Mammary epithelial cell (primary cell): ENCODE measurements at regions of chr11 and their contacts with region 1.

Region 1: DNA sequence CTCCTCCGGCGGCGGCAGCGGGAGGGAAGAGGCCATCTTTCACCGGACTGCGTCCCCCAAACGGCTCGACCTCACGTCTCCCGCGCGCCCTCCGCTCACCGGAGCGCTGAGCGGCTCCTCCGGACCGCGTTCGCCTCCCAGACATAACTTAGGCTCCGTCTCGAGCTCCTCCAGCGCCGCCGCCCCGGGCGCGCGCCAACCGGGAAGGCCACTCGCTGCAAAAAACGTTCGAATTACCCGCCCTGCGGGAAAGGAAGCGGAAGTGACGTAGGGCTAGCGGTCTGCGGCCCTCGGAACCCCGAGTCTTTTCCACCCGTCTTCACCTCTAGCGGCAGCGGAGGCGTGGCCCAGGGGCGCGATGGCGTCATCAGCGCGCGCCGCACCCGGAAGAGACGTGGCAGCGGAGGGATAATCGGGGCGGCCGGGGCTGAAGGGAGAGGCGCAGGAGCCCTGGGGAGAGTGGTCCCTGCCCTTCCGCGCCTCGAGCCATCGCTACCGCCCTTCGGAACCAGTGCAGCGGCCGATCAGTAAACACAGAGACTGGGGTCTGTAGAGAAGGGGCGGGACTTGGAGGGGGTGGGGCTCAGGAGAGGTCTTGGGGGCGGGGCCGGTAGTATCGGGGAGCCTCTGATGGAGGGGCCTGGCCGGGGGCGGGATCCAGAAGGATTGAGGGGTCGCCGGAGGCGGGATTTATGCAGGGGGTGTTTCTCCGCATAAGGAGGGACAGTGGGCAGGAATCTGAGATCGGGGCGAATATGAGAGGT is at the starts of genes CDCA5 and ZFPL1:
- DNase-seq: peak; percentile 93
- H3K4me3 ChIP-seq: peak within 1 kb of the TSS; percentile 72 to 88 (median 80)
- H3K27ac ChIP-seq: peak within 1 kb of the TSS; percentile 70
- H3K4me1 ChIP-seq: peaks cover 33% of the 10 kb centered on the region
- H3K27me3 ChIP-seq: no peaks in the 10 kb centered on the region
- CTCF ChIP-seq: no peak
- total RNA-seq, gene CDCA5: 2.2 to 34.6 TPM
- total RNA-seq, gene ZFPL1: 38.0 to 40.0 TPM

Region 2: DNA sequence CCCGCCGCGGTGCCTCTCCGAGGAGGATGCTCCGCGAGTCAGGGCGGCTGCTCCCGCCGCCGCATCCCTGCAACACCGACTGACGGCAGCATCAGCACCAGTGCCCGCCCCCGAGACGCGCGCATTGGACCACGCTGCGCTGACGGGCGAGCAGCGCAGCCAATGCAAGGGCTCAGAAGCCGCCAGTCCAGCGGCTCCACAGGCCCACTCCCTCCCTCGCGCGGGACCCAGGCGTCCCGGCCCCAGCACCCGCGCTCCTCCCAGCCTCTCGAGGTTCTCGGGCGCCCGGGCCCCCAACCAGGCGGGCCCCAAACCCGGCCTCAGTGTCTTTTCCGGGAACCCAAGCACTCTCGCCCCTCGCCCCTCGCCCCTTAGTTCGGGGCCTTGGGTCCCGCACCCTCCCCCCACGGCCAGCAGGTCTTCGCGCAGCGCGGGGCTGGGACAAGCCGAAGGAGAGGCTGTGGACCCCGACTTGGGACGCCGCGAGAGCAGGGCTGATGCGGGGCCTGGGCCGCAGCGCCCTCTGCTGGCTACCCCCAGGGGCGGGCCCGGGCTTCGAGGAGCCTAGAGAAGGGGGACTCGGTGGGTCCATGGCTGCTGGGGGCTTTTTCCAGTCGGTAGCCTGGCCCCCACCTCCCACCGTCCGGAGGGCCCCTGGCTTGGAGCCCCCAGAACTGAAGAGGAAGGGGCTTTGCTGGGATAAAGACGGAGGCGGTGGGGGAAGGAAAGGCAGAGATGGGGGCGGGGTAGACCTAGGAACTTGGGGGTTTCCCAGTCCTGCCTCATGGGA is 360.7 kb before region 1 on chr11 and contains the start of gene NRXN2:
- CTCF ChIA-PET with region 1: no interaction called
- dilution Hi-C with region 1: no loop called
- in situ Hi-C with region 1: no loop called
- intact Hi-C with region 1: no loop called
- DNase-seq: peak; percentile 77
- H3K4me3 ChIP-seq: peak within 1 kb of the TSS; percentile 55 to 85 (median 57)
- H3K27ac ChIP-seq: no peak within 1 kb of the TSS
- H3K4me1 ChIP-seq: peaks cover 8% of the 10 kb centered on the region
- H3K27me3 ChIP-seq: no peaks in the 10 kb centered on the region
- CTCF ChIP-seq: peak; percentile 80 to 95
- total RNA-seq, gene NRXN2: 4.5 to 18.8 TPM

Region 3: DNA sequence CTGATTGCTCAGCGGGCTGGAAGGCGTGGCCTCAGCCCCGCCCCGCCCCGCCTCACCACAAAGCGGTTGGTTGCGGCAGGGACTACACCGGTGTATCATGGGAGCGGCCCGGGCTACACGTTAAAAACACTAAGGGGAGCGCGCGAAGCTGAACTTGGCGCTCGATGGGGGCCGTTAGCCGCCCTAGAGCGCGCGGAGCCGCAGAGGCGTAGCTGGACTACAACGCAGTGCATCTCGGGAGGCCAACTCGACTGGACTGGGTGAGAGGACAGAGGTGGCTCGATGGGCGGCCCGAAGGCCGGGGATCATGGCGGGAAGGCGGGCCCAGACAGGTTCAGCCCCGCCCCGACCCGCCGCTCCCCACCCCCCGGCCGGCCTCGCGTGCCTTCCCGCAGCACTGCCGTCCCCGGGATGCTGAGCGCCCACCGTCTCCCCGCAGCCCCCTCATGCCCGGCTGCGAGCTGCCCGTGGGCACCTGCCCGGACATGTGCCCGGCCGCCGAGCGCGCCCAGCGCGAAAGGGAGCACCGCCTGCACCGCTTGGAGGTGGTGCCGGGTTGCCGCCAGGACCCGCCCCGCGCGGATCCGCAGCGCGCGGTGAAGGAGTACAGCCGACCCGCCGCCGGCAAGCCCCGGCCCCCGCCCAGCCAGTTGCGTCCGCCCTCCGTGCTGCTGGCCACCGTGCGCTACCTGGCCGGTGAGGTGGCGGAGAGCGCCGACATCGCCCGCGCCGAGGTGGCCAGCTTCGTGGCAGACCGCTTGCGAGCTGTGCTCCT is 43.0 kb before region 1 on chr11 and contains the start of gene SAC3D1:
- CTCF ChIA-PET with region 1: no interaction called
- dilution Hi-C with region 1: no loop called
- in situ Hi-C with region 1: no loop called
- intact Hi-C with region 1: loop called (anchors 2 kb)
- DNase-seq: peak; percentile 97
- H3K4me3 ChIP-seq: peak within 1 kb of the TSS; percentile 43 to 89 (median 80)
- H3K27ac ChIP-seq: peak within 1 kb of the TSS; percentile 9
- H3K4me1 ChIP-seq: peaks cover 16% of the 10 kb centered on the region
- H3K27me3 ChIP-seq: no peaks in the 10 kb centered on the region
- CTCF ChIP-seq: no peak
- total RNA-seq, gene SAC3D1: 13.2 to 25.1 TPM

Region 4: DNA sequence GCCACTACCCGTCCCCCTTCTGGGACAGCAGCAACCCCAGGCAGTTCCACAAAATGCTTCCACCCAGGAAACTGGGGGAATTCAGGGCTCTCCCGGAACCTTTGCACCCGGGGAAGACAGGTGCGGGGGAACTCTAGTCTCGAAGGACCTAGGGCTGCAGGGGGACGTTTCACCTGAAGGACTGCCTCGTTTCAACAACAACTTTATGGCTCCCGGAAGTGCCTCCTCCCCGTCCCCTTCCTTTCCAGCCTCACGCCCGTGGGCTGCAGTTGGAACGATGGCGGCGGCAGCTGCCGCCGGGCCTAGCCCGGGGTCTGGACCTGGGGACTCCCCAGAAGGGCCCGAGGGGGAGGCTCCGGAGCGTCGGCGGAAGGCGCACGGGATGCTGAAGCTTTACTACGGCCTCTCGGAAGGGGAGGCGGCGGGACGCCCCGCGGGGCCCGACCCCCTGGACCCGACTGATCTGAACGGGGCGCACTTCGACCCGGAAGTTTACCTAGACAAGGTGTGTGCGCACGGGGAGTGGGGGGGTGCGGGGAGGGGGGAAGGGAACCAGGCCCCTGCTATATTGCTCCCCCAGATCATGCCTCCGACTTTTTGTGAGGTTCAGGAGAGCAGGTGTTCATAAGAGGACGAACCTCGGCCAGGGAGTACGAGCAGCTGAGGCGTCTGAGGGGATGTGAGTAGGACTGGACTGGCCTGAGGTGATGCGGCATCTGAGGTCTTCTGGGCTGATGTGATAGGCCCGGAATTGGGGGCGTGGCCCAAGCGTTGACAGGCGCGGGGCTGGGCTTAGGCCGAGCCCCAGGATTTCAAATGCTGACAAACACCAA is 12.2 kb after region 1 on chr11 and contains the start of gene VPS51:
- CTCF ChIA-PET with region 1: no interaction called
- dilution Hi-C with region 1: no loop called
- in situ Hi-C with region 1: no loop called
- intact Hi-C with region 1: loop called (anchors 1 kb)
- DNase-seq: peak; percentile 83
- H3K4me3 ChIP-seq: peak within 1 kb of the TSS; percentile 57 to 70 (median 61)
- H3K27ac ChIP-seq: peak within 1 kb of the TSS; percentile 50
- H3K4me1 ChIP-seq: peaks cover 9% of the 10 kb centered on the region
- H3K27me3 ChIP-seq: no peaks in the 10 kb centered on the region
- CTCF ChIP-seq: no peak
- total RNA-seq, gene VPS51: 78.4 to 125 TPM